HepG2 (cell line): ENCODE measurements at regions of chr10 and their contacts with region 1.

Region 1: GRCh38 chr10:3902054-3902808 is 117.2 kb upstream of the KLF6 start:
- DNase-seq: peak; percentile 38
- ATAC-seq: no peak
- H3K4me3 ChIP-seq: no peak overlapping the region
- H3K27ac ChIP-seq: peak overlapping the region; percentile 33
- H3K4me1 ChIP-seq: peaks cover 39% of the 10 kb centered on the region
- H3K27me3 ChIP-seq: no peaks in the 10 kb centered on the region
- CTCF ChIP-seq: 0 out of 2 replicates have a peak, but pooled peaks have one; percentile 14
- EP300 ChIP-seq: peak in 1 of 2 experiments; percentile 32; a peak in 1 of 4 replicates
- POLR2A ChIP-seq: no peak
- RAD21 ChIP-seq: no peak

Region 2: GRCh38 chr10:3887885-3888476 is 14.2 kb before region 1 on chr10:
- CTCF ChIA-PET with region 1: no interaction called
- POLR2A ChIA-PET with region 1: interaction called, 15 read pairs
- in situ Hi-C with region 1: no loop called
- intact Hi-C with region 1: no loop called
- DNase-seq: no peak
- ATAC-seq: no peak
- H3K4me3 ChIP-seq: no peak overlapping the region
- H3K27ac ChIP-seq: peak overlapping the region; percentile 78
- H3K4me1 ChIP-seq: peaks cover 68% of the 10 kb centered on the region
- H3K27me3 ChIP-seq: no peaks in the 10 kb centered on the region
- CTCF ChIP-seq: no peak
- EP300 ChIP-seq: no peak
- POLR2A ChIP-seq: no peak
- RAD21 ChIP-seq: no peak